Right lobe of liver (tissue), 6 donors: ENCODE measurements at regions of chr4 and their contacts with region 1.

Region 1: GRCh38 chr4:76067652-76068286 is 6.7 kb upstream of the ART3 start:
- DNase-seq: peak in 2 of 3 donors; percentile 51 to 71
- ATAC-seq: peak; percentile 96 to 98 (median 97)
- H3K4me3 ChIP-seq: no peak overlapping the region
- H3K27ac ChIP-seq: no peak overlapping the region
- H3K4me1 ChIP-seq: no peaks in the 10 kb centered on the region
- H3K27me3 ChIP-seq: no peaks in the 10 kb centered on the region
- CTCF ChIP-seq: peak; percentile 81 to 94 (median 90)
- POLR2A ChIP-seq: no peak

Region 2: DNA sequence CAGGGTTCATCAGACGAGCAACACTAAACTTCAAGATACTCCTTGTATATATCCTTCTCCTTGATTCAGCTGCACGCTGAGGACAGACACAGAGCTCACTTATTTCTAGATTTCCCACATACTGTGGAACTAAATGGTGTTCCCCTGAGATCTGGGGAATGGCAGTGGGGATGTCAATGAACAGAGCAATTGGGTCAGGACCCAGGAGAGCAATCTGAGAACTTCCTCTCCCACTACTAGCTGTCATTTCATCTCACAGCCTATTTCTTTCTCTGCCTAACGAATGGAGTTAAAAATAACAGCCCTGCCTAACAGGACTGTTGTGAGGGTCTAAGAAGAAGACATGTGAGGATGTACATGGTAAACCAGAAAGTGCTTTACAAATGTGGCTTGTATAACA is 137.6 kb before region 1 on chr4:
- intact Hi-C with region 1: no loop called
- DNase-seq: no peak
- ATAC-seq: no peak
- H3K4me3 ChIP-seq: no peak overlapping the region
- H3K27ac ChIP-seq: no peak overlapping the region
- H3K4me1 ChIP-seq: peaks cover 0 to 3% (median under 1%) of the 10 kb centered on the region in 4 donors
- H3K27me3 ChIP-seq: no peaks in the 10 kb centered on the region
- CTCF ChIP-seq: no peak
- POLR2A ChIP-seq: no peak

Region 3: DNA sequence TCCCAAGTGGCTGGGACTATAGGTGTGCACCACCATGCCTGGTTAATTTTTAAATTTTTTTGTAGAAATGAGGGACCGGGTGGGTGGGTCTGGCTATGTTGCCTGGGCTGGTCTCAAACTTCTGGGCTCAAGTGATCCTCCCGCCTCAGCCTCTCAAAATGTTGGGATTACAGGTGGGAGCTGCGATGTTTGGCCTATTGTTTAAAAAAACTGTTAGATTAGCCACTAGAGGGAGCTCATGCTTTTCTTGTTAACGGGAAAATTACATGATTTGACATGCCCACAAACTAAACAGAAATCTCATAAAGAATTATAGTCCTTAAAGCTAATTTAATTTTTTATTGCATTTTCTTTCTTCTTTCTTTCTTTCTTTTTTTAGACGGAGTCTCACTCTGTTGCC is 72.0 kb before region 1 on chr4:
- intact Hi-C with region 1: loop called (anchors 5 to 10 kb)
- DNase-seq: no peak
- ATAC-seq: peak; percentile 59 to 70 (median 64)
- H3K4me3 ChIP-seq: no peak overlapping the region
- H3K27ac ChIP-seq: no peak overlapping the region
- H3K4me1 ChIP-seq: peaks cover 0 to 3% (median 0%) of the 10 kb centered on the region in 4 donors
- H3K27me3 ChIP-seq: no peaks in the 10 kb centered on the region
- CTCF ChIP-seq: peak; percentile 58 to 73 (median 68)
- POLR2A ChIP-seq: no peak

Region 4: DNA sequence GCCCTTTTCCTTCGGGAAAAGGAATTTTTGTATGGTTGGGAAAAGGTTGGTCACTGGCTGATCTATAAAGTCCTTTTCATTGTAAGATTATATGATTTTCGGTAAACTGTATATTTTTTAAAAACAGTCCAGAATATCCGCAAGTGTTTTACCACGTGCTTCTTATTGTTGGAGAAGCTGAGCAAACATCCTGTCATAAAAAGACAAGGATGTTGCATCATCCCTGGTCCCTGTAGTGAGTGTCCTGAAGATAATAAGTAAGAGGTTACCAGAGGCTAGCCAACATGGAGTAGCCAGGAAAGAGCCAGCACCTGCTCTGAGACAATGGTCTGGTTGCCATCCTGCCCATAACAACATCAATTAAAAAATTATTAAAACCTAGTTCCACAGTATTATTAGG is 65.6 kb before region 1 on chr4:
- intact Hi-C with region 1: loop called (anchors 5 to 10 kb)
- DNase-seq: no peak
- ATAC-seq: peak; percentile 44 to 85 (median 77)
- H3K4me3 ChIP-seq: no peak overlapping the region
- H3K27ac ChIP-seq: no peak overlapping the region
- H3K4me1 ChIP-seq: peaks cover 0 to 8% (median 4%) of the 10 kb centered on the region in 4 donors
- H3K27me3 ChIP-seq: no peaks in the 10 kb centered on the region
- CTCF ChIP-seq: no peak
- POLR2A ChIP-seq: no peak

Region 5: DNA sequence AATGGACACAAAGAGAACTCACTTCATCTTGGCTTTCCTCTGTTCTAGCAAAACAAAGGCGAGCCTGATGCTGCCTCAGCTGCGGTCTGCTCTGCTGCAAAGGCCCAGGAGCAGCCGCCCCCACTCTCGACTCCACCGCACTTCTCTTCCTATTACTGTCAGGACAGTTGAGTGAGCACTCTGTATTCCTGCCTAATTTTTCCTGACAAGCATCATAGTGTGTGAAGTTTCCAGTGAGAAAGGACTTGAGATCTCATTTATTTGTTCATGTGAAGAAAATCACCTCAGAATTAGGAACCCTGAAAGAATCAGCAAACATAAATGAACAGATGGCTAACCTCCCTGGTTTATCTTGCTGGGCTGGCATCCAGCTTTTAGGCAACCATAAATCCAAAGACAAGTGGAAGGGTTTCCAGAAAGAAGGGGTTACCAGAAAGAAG is 130.2 kb after region 1 on chr4:
- intact Hi-C with region 1: no loop called
- DNase-seq: peak in 1 of 3 donors; percentile 57
- ATAC-seq: peak; percentile 18 to 33 (median 26)
- H3K4me3 ChIP-seq: no peak overlapping the region
- H3K27ac ChIP-seq: peak overlapping the region; percentile 81 to 89 (median 89)
- H3K4me1 ChIP-seq: peaks cover 6 to 91% (median 45%) of the 10 kb centered on the region in 4 donors
- H3K27me3 ChIP-seq: no peaks in the 10 kb centered on the region
- CTCF ChIP-seq: no peak
- POLR2A ChIP-seq: no peak

Region 6: GRCh38 chr4:76213415-76214176 is 145.8 kb after region 1 on chr4 and contains the start of gene SCARB2:
- intact Hi-C with region 1: no loop called
- DNase-seq: peak; percentile 93 to 94 (median 93)
- ATAC-seq: peak; percentile 75 to 92 (median 85)
- H3K4me3 ChIP-seq: peak within 1 kb of the TSS; percentile 63 to 80 (median 79)
- H3K27ac ChIP-seq: peak within 1 kb of the TSS; percentile 92 to 99 (median 93)
- H3K4me1 ChIP-seq: peaks cover 0 to 78% (median 35%) of the 10 kb centered on the region in 4 donors
- H3K27me3 ChIP-seq: no peaks in the 10 kb centered on the region
- CTCF ChIP-seq: no peak
- POLR2A ChIP-seq: peak; percentile 97
- total RNA-seq, gene SCARB2: 102 to 133 (median 125) TPM